ENCODE measurements at regions of chr6 and their contacts with region 1.

Region 1: GRCh38 chr6:73514746-73515110 is 6.1 kb downstream of the EEF1A1 start:
- DNase-seq: no peak
- ATAC-seq: peak in 1 of 2 donors; percentile 8

Region 2: GRCh38 chr6:73435236-73435635 is 79.5 kb before region 1 on chr6:
- intact Hi-C with region 1: no loop called
- DNase-seq: no peak
- ATAC-seq: no peak

Region 3: DNA sequence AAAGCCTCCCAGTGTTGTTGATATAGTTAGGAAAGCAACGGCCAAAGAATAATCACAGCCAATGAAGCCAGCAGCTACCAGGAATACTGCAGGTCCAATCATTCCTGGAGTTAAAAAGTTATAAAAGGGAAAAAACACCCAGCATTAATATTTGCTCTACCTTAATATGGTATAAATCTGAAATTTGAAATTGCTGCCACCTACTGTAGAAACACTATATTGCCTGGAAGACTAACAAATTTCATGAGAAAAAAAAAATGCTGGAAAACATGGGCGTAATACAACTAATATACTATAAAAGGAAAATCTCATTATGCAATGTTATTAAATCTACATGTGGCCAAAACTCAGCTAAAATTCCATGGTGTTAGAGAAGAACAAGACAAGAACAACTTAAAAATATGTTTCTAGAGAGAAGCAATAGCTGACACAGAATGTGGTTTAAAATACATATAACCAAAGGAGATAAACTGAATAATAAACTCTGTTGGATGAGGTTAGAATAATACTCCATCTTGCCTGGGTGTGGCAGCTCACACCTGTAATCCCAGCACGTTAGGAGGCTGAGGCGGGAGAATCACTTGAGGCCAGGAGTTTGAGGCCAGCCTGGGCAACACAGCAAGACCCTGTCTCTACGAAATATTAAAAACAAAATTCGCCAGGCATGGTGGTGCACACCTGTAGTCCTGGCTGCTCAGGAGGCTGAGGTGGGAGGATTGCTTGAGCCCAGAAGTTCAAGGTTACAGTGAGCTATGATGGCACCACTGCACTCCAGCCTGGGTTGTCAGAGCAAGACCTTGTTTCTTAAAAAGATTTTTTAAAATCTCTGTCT is 95.9 kb after region 1 on chr6:
- intact Hi-C with region 1: loop called (anchors 2 to 5 kb)
- DNase-seq: no peak
- ATAC-seq: peak; percentile 59 to 61

Region 4: GRCh38 chr6:73695619-73696421 is 181.1 kb after region 1 on chr6 and contains the start of gene CD109:
- intact Hi-C with region 1: no loop called
- DNase-seq: peak; percentile 48
- ATAC-seq: peak; percentile 93
- total RNA-seq, gene CD109: 10.5 to 26.4 TPM

Region 5: DNA sequence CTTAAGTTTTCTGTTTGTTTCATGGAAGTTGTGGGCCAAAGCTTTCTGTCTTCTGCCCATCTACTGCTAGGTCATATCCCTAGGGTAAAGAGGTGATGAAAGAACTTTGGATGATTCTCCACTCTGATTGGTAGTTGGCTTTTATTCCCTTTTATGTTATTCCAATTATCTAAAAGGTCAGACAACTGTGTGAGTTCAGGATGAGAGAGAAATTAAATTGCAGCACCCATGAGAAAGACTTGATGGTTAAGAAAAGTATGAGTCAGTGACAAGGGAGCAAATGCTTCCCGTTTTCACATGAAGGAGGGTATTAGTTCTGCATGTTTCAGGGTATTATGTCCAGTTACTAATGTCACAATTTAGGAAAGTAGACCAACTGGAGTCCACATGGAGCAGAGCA is 317.6 kb after region 1 on chr6:
- intact Hi-C with region 1: no loop called
- DNase-seq: no peak
- ATAC-seq: peak; percentile 30 to 60

Measured in left cardiac atrium (tissue), 4 donors.